ENCODE measurements at regions of chr4 and their contacts with region 1.

Region 1: GRCh38 chr4:41214136-41214824 is at the start of gene APBB2:
- DNase-seq: peak; percentile 94
- ATAC-seq: peak; percentile 85
- H3K4me3 ChIP-seq: peak within 1 kb of the TSS; percentile 81 to 94 (median 93)
- H3K27ac ChIP-seq: peak within 1 kb of the TSS; percentile 80
- H3K4me1 ChIP-seq: peaks cover 44% of the 10 kb centered on the region
- H3K27me3 ChIP-seq: peaks cover 0 to 3% of the 10 kb centered on the region in 2 experiments; a peak in 2 of 5 replicates
- CTCF ChIP-seq: peak; percentile 90
- EP300 ChIP-seq: no peak
- POLR2A ChIP-seq: peak; percentile 79 to 82
- RAD21 ChIP-seq: peak; percentile 76
- total RNA-seq, gene APBB2: 17.0 and 19.7 TPM in 2 replicates

Region 2: DNA sequence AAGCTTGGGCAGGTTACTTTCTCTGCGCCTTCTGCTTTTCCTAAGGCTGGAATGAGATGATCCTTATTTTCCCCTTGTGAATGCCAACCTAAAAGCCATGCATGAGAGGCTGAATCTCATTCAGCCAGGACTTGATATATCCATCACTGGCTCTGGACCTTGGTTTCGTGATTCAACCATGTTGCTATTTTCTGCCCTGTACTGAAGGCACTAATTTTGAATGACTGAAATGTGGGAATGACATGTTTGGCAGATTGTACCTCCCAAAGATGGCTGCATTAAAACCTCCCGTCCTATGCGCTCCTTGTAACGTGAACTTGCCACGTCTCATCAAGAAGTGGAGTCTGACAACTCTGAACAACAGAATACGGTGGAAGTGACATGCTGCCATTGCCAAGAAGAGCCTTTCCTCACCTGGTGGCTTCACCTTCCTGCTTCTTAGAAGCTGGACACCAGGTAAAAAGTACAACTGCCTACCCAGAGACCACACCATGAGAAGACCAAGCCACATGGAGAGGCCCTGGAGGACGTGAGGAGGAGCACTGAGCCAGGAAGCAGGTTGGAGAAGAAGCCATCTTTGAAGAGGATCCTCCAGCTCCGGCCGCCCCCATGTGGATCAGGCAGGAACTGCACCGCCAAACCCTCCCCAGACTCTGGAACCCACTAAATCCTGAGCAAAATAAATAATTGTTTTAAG is 290.0 kb before region 1 on chr4:
- CTCF ChIA-PET with region 1: interaction called, 20 read pairs
- POLR2A ChIA-PET with region 1: interaction called, 5 read pairs
- in situ Hi-C with region 1: loop called (anchors 5 kb)
- intact Hi-C with region 1: loop called (anchors 1 kb)
- DNase-seq: peak; percentile 28
- ATAC-seq: peak; percentile 85
- H3K4me3 ChIP-seq: no peak overlapping the region
- H3K27ac ChIP-seq: no peak overlapping the region
- H3K4me1 ChIP-seq: peaks cover 7% of the 10 kb centered on the region; the same call in 1 of the 2 replicates
- H3K27me3 ChIP-seq: no peaks in the 10 kb centered on the region
- CTCF ChIP-seq: peak; percentile 66
- EP300 ChIP-seq: no peak
- POLR2A ChIP-seq: no peak
- RAD21 ChIP-seq: no peak

Region 3: DNA sequence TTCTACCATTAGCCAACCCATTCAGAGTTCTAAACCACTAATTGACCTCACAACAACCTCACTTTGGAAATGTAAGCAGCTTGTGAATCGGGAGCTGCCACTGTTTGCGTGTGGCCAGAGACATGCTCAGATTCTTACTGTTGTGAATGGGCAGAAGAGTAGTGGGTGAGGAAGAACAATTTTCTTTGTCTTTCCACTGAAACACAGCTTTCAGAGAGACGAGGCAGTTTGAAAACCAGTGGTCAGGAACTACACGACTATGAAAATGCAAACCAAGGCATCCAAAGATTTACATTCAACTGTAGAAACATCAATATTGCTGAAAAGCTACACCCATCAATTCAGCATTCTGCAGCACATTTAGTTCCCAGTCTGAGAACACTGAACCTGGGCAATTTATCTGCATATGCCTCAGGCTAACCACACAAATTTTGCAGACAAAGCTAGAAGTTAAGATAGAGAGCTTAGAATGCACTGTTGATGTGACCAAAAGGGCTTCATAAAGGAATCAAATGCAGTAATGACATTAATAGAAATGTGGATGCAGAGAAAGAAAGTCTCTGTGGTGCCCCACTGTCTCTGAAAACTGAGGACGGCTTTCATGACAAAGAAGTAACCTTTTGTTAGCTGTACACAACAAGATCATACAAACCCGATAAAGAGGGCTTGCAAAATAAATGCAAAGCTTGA is 134.3 kb before region 1 on chr4:
- CTCF ChIA-PET with region 1: no interaction called
- POLR2A ChIA-PET with region 1: no interaction called
- in situ Hi-C with region 1: no loop called
- intact Hi-C with region 1: loop called (anchors 5 kb)
- DNase-seq: no peak
- ATAC-seq: no peak
- H3K4me3 ChIP-seq: no peak overlapping the region
- H3K27ac ChIP-seq: no peak overlapping the region
- H3K4me1 ChIP-seq: peaks cover 29% of the 10 kb centered on the region
- H3K27me3 ChIP-seq: no peaks in the 10 kb centered on the region
- CTCF ChIP-seq: no peak
- EP300 ChIP-seq: no peak
- POLR2A ChIP-seq: no peak
- RAD21 ChIP-seq: no peak

Region 4: GRCh38 chr4:41133454-41134018 is 80.7 kb before region 1 on chr4:
- CTCF ChIA-PET with region 1: no interaction called
- POLR2A ChIA-PET with region 1: interaction called, 6 read pairs
- in situ Hi-C with region 1: loop called (anchors 10 kb)
- intact Hi-C with region 1: loop called (anchors 1 kb)
- DNase-seq: no peak
- ATAC-seq: no peak
- H3K4me3 ChIP-seq: no peak overlapping the region
- H3K27ac ChIP-seq: no peak overlapping the region
- H3K4me1 ChIP-seq: peaks cover 74% of the 10 kb centered on the region
- H3K27me3 ChIP-seq: no peaks in the 10 kb centered on the region
- CTCF ChIP-seq: no peak
- EP300 ChIP-seq: no peak
- POLR2A ChIP-seq: no peak
- RAD21 ChIP-seq: no peak

Region 5: DNA sequence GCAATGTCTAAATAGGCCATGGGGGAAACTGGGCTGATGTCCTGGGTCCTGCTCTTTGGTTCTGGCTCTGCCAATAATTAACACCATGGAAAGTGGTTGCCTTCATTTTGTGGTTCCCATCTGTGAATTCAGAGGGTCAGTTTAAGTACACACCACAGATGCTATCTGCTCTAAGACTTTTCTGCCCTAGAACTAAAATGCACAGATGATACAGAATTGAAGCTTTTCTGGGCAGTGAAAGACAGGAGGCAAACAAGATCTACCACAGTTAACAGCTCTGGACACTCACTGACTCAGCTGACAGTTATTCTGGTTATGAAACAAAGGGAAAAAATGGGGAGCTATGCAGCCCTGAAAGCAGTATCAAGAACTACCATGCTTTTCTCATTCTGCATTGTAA is 37.3 kb before region 1 on chr4:
- CTCF ChIA-PET with region 1: interaction called, 4 read pairs
- POLR2A ChIA-PET with region 1: interaction called, 4 read pairs
- in situ Hi-C with region 1: no loop called
- intact Hi-C with region 1: loop called (anchors 5 kb)
- DNase-seq: peak; percentile 80
- ATAC-seq: peak; percentile 94
- H3K4me3 ChIP-seq: peak overlapping the region in 1 of 3 experiments; percentile 22; a peak in 3 of 6 replicates
- H3K27ac ChIP-seq: peak overlapping the region; percentile 66
- H3K4me1 ChIP-seq: peaks cover 65% of the 10 kb centered on the region
- H3K27me3 ChIP-seq: no peaks in the 10 kb centered on the region
- CTCF ChIP-seq: peak; percentile 36
- EP300 ChIP-seq: no peak
- POLR2A ChIP-seq: no peak
- RAD21 ChIP-seq: no peak

Region 6: GRCh38 chr4:41360214-41360920 is 146.1 kb after region 1 on chr4:
- CTCF ChIA-PET with region 1: no interaction called
- POLR2A ChIA-PET with region 1: no interaction called
- in situ Hi-C with region 1: no loop called
- intact Hi-C with region 1: no loop called
- DNase-seq: no peak
- ATAC-seq: peak; percentile 91
- H3K4me3 ChIP-seq: peak overlapping the region; percentile 50 to 68 (median 50); a peak in 5 of 6 replicates
- H3K27ac ChIP-seq: no peak overlapping the region
- H3K4me1 ChIP-seq: peaks cover 9% of the 10 kb centered on the region; the same call in 1 of the 2 replicates
- H3K27me3 ChIP-seq: peaks cover 5 to 49% of the 10 kb centered on the region in 2 experiments
- CTCF ChIP-seq: no peak
- EP300 ChIP-seq: no peak
- POLR2A ChIP-seq: no peak
- RAD21 ChIP-seq: no peak

Measured in HepG2 (cell line).